Panc1 (cell line): ENCODE measurements at regions of chr7 and their contacts with region 1.

Region 1: DNA sequence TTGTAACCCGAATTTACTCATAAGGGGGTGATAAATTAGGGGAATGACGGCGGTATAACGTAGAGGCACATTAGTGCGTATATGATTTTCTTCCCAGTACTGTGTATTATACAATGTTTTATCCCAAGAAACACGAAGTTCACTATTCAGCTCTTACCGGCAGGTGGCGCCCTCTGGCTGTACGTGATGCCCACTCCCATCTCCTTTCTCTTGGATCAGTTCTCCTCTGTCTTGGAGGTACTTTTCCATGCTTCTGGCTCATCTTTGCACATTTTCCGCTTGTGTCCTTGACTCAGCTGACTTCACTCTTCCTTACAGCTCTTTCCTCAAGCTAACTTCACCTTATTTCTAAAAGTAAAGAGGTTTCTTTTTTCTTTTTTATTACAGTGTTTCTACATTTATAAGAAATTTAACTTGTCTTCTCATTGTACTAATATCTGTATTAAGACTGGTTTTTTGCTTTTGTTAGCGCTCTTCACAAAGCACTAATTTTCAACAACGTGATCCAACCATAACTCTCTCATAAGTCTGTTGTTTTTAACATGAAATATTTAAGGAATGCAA is 21.3 kb downstream of the TMEM176B start:
- DNase-seq: peak; percentile 55
- ATAC-seq: peak; percentile 99
- H3K4me3 ChIP-seq: no peak overlapping the region
- H3K27ac ChIP-seq: no peak overlapping the region
- H3K4me1 ChIP-seq: peaks cover 3% of the 10 kb centered on the region; the same call in 1 of the 2 replicates
- H3K27me3 ChIP-seq: no peaks in the 10 kb centered on the region; the same call in none of the 2 replicates
- CTCF ChIP-seq: peak; percentile 94

Region 2: GRCh38 chr7:150748376-150748775 is 30.4 kb before region 1 on chr7:
- CTCF ChIA-PET with region 1: no interaction called
- POLR2A ChIA-PET with region 1: no interaction called
- in situ Hi-C with region 1: no loop called
- intact Hi-C with region 1: no loop called
- DNase-seq: no peak
- ATAC-seq: no peak
- H3K4me3 ChIP-seq: no peak overlapping the region
- H3K27ac ChIP-seq: no peak overlapping the region
- H3K4me1 ChIP-seq: no peaks in the 10 kb centered on the region
- H3K27me3 ChIP-seq: peaks cover 7% of the 10 kb centered on the region; the same call in 1 of the 2 replicates
- CTCF ChIP-seq: no peak

Region 3: DNA sequence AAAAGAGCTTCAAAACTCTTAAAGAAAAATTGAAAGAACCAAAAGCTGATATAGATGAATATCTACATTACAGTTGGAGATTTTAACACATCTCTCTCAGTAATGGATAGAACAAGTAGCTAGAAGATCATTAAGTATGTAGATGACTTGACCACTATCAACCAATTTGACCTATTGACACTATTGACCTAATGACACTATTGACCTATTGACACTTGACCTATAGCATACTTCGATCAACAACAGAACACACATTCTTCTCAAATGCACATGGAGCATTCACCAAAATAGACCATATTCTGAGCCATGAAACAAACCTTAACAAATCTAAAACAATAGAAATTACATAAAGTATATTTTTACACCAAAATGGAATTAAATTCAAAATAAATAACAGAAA is 19.3 kb before region 1 on chr7:
- CTCF ChIA-PET with region 1: interaction called, 12 read pairs
- POLR2A ChIA-PET with region 1: no interaction called
- in situ Hi-C with region 1: no loop called
- intact Hi-C with region 1: no loop called
- DNase-seq: no peak
- ATAC-seq: no peak
- H3K4me3 ChIP-seq: no peak overlapping the region
- H3K27ac ChIP-seq: no peak overlapping the region
- H3K4me1 ChIP-seq: no peaks in the 10 kb centered on the region
- H3K27me3 ChIP-seq: peaks cover 2% of the 10 kb centered on the region; the same call in 1 of the 2 replicates
- CTCF ChIP-seq: no peak

Region 4: GRCh38 chr7:150830937-150831336 is 52.1 kb after region 1 on chr7:
- CTCF ChIA-PET with region 1: no interaction called
- POLR2A ChIA-PET with region 1: no interaction called
- in situ Hi-C with region 1: no loop called
- intact Hi-C with region 1: no loop called
- DNase-seq: no peak
- ATAC-seq: no peak
- H3K4me3 ChIP-seq: no peak overlapping the region
- H3K27ac ChIP-seq: no peak overlapping the region
- H3K4me1 ChIP-seq: no peaks in the 10 kb centered on the region
- H3K27me3 ChIP-seq: 0 out of 2 replicates have a peak, but pooled peaks cover 3% of the 10 kb centered on the region
- CTCF ChIP-seq: no peak